ENCODE measurements at regions of chr16 and their contacts with region 1.

Region 1: DNA sequence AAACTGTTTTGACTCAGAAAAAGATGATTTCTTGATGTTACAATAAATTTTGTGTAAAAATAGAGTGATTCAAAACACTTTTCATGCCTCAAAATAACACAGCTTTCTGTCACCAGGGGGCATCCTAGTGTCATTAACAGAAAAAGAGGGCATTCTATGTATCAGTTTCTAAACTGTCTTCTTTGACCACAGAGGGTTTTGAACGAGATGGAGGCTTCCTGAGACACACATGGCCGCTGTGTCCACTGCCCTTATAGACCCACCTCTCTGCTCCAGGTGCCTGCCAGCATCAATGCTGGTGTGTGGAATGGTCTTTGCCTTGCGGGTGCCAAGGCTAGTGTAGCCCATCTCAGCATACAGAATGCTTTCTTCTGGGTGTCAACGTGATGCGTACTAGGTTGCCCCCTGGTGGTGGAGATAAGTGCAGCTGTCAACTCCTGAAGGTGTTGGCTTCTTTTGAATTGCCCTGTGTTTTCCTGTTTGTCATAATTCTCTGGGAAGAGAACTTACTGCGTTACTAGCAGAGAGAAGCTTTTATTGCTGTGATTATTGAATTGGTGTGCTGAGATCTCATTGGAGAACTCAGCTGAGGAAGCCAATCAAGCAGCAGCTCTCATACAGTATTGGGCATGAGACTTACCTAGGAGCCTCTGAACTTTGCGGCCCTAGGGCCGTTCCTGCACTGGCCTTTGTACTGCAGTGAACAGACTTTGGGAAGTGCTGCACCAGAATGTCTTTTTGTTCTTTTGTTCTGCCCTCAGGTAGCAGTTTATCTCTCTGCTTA is 38.6 kb downstream of the USP10 start:
- DNase-seq: peak; percentile 92
- H3K4me3 Mint-ChIP-seq: no peak overlapping the region
- H3K27ac Mint-ChIP-seq: peak overlapping the region; percentile 71
- H3K4me1 Mint-ChIP-seq: peaks cover 53% of the 10 kb centered on the region
- H3K27me3 Mint-ChIP-seq: no peaks in the 10 kb centered on the region

Region 2: GRCh38 chr16:84175350-84176081 is 562.9 kb before region 1 on chr16:
- intact Hi-C with region 1: no loop called
- DNase-seq: peak; percentile 83
- H3K4me3 Mint-ChIP-seq: no peak overlapping the region
- H3K27ac Mint-ChIP-seq: no peak overlapping the region
- H3K4me1 Mint-ChIP-seq: peaks cover 11% of the 10 kb centered on the region
- H3K27me3 Mint-ChIP-seq: peaks cover 3% of the 10 kb centered on the region

Region 3: DNA sequence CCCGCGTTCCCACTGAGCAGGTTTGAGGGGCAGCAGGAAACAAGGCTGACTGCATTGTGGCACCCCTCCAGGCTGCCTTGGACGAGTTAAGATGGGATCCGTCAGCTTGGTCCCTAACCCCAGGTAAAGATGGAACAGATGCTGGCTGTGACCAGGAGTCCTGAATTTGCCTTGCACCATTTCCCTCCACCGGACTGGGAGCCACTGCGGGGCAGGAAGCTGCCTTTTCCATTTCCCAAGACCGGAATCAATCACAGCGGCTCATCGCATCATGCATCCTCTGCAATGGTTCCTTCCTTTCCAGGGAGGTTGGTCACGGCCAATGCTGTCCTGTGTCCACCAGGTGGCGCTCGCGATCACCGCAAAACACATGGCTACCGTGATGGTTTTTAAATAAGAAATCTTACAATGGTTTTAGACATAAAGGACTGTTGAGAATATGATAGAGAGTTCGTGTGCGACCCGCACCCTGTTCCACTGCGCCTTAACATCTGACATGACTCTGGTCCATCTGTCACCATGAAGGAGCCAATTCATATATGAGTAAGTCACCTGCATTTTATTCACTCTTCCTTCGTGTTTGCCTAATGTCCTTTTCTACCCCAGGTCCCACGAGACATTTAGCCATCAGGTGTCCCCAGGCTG is 227.1 kb before region 1 on chr16:
- intact Hi-C with region 1: loop called (anchors 2 kb)
- DNase-seq: peak; percentile 95
- H3K4me3 Mint-ChIP-seq: peak overlapping the region; percentile 10
- H3K27ac Mint-ChIP-seq: peak overlapping the region; percentile 77
- H3K4me1 Mint-ChIP-seq: peaks cover 58% of the 10 kb centered on the region
- H3K27me3 Mint-ChIP-seq: no peaks in the 10 kb centered on the region

Region 4: GRCh38 chr16:84593825-84594724 is 144.4 kb before region 1 on chr16:
- intact Hi-C with region 1: no loop called
- DNase-seq: peak; percentile 93
- H3K4me3 Mint-ChIP-seq: peak overlapping the region; percentile 84
- H3K27ac Mint-ChIP-seq: peak overlapping the region; percentile 95
- H3K4me1 Mint-ChIP-seq: peaks cover 62% of the 10 kb centered on the region
- H3K27me3 Mint-ChIP-seq: no peaks in the 10 kb centered on the region

Region 5: DNA sequence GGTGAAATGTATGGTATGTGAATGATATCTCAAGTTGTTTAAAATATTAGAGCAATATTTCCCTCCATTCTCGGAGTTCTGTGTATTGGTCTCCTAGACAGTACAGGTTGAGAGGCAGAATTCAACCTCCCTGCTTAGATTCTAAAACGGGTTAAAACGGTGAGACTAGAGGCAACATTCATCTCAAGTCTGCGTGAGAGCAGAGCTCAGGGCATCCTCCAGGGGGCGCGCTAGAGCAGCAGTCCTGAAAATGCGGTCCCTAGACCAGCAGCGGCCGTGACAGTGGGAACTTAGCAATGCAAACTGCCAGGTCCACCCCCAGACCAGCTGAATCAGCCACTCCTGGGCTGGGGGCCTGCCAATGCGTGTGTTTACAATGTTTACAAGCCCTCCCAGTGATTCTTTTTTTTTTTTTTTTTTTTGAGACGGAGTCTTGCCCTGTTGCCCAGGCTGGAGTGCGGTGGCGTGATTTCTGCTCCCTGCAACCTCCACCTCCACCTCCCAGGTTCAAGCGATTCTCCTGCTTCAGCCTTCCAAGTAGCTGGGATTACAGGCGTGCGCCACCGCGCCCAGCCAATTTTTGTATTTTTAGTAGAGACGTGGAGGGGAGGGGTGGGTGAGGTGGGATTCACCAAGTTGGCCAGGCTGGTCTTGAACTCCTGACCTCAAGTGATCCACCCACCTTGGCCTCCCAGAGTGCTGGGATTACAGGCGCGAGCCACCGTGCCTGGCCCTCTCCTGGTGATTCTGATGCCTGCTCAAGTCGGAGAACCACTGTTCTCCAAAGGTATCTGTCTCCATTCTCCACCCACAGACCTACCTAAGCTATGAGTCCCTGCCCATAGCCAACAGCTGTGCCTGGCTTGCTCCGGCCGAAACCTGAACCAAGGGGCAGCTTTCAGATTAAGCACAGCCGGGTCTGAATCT is 65.9 kb before region 1 on chr16:
- intact Hi-C with region 1: loop called (anchors 1 kb)
- DNase-seq: peak; percentile 94
- H3K4me3 Mint-ChIP-seq: no peak overlapping the region
- H3K27ac Mint-ChIP-seq: no peak overlapping the region
- H3K4me1 Mint-ChIP-seq: peaks cover 4% of the 10 kb centered on the region
- H3K27me3 Mint-ChIP-seq: peaks cover 4% of the 10 kb centered on the region

Region 6: DNA sequence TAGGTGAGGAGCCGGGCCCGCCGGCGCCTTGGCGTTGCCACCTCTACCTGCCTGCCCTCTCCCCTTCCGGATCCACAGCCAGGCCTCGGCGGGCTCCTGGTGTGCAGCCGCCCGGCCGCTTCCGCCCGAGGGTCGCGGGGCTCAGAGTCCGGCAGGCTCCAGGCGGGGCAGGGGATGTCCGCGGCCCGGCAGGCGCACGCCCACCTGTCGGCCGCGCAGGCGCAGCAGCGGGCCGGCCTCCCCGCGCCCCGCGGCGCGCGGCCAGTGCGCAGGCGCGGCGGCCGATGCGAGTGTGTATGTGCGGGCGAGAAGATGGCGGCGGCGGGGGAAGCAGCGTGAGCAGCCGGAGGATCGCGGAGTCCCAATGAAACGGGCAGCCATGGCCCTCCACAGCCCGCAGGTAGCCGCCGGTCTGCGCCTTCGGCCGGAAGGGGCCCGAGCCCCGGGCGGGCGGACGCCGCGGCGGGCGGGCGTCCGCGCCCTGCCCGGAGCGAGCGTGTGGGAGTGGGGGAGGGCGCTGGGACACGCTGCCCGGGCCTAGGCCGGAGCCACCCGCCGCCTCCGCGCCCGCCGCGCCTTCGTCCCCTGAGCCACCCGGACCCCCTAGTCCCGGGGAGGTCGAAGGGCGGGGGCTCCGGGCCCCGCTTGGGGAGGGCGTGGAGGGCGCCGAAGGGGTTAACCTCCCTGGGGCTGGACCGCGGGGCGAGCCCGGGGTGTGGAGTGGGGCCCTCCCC is 38.6 kb before region 1 on chr16 and contains the start of gene USP10:
- intact Hi-C with region 1: loop called (anchors 5 kb)
- DNase-seq: peak; percentile 97
- H3K4me3 Mint-ChIP-seq: peak within 1 kb of the TSS; percentile 90
- H3K27ac Mint-ChIP-seq: peak within 1 kb of the TSS; percentile 95
- H3K4me1 Mint-ChIP-seq: peaks cover 24% of the 10 kb centered on the region
- H3K27me3 Mint-ChIP-seq: no peaks in the 10 kb centered on the region
- total RNA-seq, gene USP10: 148 and 177 TPM in 2 replicates

Region 7: GRCh38 chr16:84726079-84726668 is 12.3 kb before region 1 on chr16:
- intact Hi-C with region 1: loop called (anchors 1 kb)
- DNase-seq: peak; percentile 94
- H3K4me3 Mint-ChIP-seq: peak overlapping the region; percentile 58
- H3K27ac Mint-ChIP-seq: peak overlapping the region; percentile 41
- H3K4me1 Mint-ChIP-seq: peaks cover 62% of the 10 kb centered on the region
- H3K27me3 Mint-ChIP-seq: no peaks in the 10 kb centered on the region

Region 8: GRCh38 chr16:84754353-84754856 is 16.0 kb after region 1 on chr16:
- intact Hi-C with region 1: loop called (anchors 2 kb)
- DNase-seq: peak; percentile 94
- H3K4me3 Mint-ChIP-seq: peak overlapping the region; percentile 66
- H3K27ac Mint-ChIP-seq: no peak overlapping the region
- H3K4me1 Mint-ChIP-seq: peaks cover 66% of the 10 kb centered on the region
- H3K27me3 Mint-ChIP-seq: no peaks in the 10 kb centered on the region

Region 9: DNA sequence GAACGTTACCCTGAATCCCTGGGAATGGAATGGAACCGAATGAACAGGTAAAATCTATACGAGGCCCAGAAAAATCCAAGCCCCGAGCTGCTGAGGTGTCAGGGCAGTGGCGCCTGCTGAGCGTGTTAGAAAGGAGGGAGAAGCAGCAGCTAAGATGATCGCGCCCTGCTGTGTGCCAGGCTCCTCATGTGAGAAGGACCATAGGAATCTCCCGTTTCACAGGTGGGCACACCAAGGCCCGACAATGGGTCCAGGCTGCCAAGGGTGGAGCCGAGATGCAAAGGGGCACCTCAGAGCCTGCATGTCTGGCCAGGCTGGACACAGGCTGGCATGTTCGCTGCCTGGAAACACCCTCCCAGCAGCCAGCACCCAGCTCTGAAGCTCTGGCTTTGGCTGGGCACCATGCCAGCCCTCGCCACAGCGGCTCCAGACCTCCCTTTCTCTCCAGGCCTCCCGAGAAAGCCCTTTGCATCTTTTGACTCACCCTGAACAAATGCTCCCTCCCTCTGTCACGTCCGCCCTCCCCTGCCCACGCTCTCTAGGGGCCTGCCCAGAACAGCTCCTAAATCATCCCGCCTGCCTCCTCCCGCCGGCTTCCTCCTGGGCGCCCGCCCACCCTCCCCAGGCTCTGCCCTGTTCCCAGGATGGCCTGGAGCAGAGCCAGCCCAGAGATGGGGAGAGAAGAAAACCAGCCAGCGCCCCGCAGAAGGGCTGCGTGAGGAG is 656.9 kb after region 1 on chr16:
- intact Hi-C with region 1: no loop called
- DNase-seq: no peak
- H3K4me3 Mint-ChIP-seq: no peak overlapping the region
- H3K27ac Mint-ChIP-seq: no peak overlapping the region
- H3K4me1 Mint-ChIP-seq: no peaks in the 10 kb centered on the region
- H3K27me3 Mint-ChIP-seq: no peaks in the 10 kb centered on the region